Psoas muscle (tissue), 8 donors: ENCODE measurements at regions of chr9 and their contacts with region 1.

Region 1: DNA sequence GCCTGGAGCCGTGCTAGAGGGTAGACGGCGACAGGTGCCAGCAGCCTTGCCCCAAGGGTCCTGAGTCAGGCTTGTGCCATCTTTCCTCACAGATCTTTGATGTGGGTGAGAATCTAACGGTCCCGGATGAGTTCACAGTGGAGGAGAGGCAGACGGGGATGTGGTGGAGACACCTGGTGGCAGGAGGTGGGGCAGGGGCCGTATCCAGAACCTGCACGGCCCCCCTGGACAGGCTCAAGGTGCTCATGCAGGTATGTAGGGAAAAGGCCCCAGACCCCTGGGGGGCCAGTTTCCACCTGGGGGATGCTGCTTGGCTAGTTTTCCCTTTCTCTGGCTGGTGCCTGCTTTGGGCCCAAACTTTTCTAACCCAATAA is 24.0 kb downstream of the PTGES2 start:
- DNase-seq: no peak
- ATAC-seq: peak; percentile 7 to 13 (median 12)
- H3K4me3 ChIP-seq: peak overlapping the region; percentile 24
- H3K27ac ChIP-seq: peak overlapping the region; percentile 97
- H3K4me1 ChIP-seq: peaks cover 92% of the 10 kb centered on the region
- H3K27me3 ChIP-seq: no peaks in the 10 kb centered on the region
- CTCF ChIP-seq: no peak

Region 2: DNA sequence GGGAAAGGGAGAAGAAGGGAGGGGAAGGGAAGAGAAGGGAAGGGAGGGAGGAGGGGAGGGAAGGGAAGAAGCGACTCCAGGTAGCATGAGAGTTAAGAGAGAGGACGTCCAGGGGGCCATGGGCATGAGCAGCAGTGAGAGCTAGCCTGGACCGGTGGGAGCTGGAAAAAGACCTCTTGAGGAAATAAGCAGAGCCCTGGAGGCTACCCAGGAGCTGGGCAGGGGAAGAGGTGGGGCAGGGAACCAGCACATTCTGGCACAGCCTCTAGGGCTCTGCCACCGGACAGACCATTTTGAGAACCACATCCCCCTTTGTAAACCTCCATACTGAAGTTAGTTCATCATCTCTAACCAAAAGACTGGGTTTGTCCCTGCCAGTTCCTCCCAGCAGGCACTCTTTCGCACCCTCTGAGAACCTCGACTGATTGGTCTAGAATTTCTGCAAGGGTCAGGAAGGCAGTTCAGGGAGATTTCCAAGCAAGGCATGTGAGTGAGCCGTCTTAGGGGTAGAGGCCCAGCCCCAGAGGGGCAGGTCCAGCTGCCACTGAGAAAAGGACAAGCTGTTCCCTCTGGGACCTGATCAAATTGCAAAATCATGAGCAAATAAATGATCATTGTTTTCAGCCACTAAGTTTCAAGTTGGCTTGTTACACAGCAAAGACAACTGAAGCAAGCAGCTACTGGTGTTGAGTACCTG is 48.1 kb before region 1 on chr9:
- intact Hi-C with region 1: loop called in 1 of 2 experiments (anchors 5 kb)
- DNase-seq: peak; percentile 40 to 75
- ATAC-seq: peak; percentile 33 to 70 (median 56)
- H3K4me3 ChIP-seq: no peak overlapping the region
- H3K27ac ChIP-seq: peak overlapping the region; percentile 71
- H3K4me1 ChIP-seq: peaks cover 28% of the 10 kb centered on the region
- H3K27me3 ChIP-seq: no peaks in the 10 kb centered on the region
- CTCF ChIP-seq: no peak